IMR-90 (cell line): ENCODE measurements at regions of chr9 and their contacts with region 1.

Region 1: GRCh38 chr9:107340920-107341632 is 58.0 kb downstream of the RAD23B start:
- DNase-seq: peak; percentile 60
- ATAC-seq: peak; percentile 50; the same call in 1 of the 2 replicates
- H3K4me3 ChIP-seq: no peak overlapping the region
- H3K27ac ChIP-seq: no peak overlapping the region
- H3K4me1 ChIP-seq: peaks cover 3% of the 10 kb centered on the region; the same call in 1 of the 2 replicates
- H3K27me3 ChIP-seq: no peaks in the 10 kb centered on the region
- CTCF ChIP-seq: peak; percentile 79
- POLR2A ChIP-seq: no peak
- RAD21 ChIP-seq: peak; percentile 68

Region 2: GRCh38 chr9:107137495-107138202 is 203.4 kb before region 1 on chr9:
- CTCF ChIA-PET with region 1: no interaction called
- POLR2A ChIA-PET with region 1: no interaction called
- dilution Hi-C with region 1: no loop called
- in situ Hi-C with region 1: no loop called
- intact Hi-C with region 1: loop called (anchors 1 kb)
- DNase-seq: peak; percentile 33
- ATAC-seq: peak; percentile 79
- H3K4me3 ChIP-seq: no peak overlapping the region
- H3K27ac ChIP-seq: no peak overlapping the region
- H3K4me1 ChIP-seq: no peaks in the 10 kb centered on the region
- H3K27me3 ChIP-seq: peaks cover 25% of the 10 kb centered on the region
- CTCF ChIP-seq: peak; percentile 67
- POLR2A ChIP-seq: no peak
- RAD21 ChIP-seq: peak; percentile 65

Region 3: GRCh38 chr9:107158321-107158720 is 182.8 kb before region 1 on chr9:
- CTCF ChIA-PET with region 1: no interaction called
- POLR2A ChIA-PET with region 1: no interaction called
- dilution Hi-C with region 1: no loop called
- in situ Hi-C with region 1: no loop called
- intact Hi-C with region 1: loop called (anchors 2 kb)
- DNase-seq: peak; percentile 37
- ATAC-seq: peak; percentile 95
- H3K4me3 ChIP-seq: no peak overlapping the region
- H3K27ac ChIP-seq: no peak overlapping the region
- H3K4me1 ChIP-seq: no peaks in the 10 kb centered on the region
- H3K27me3 ChIP-seq: peaks cover 2% of the 10 kb centered on the region
- CTCF ChIP-seq: peak; percentile 38; the same call in 1 of the 2 replicates
- POLR2A ChIP-seq: no peak
- RAD21 ChIP-seq: peak; percentile 25; the same call in 1 of the 2 replicates

Region 4: DNA sequence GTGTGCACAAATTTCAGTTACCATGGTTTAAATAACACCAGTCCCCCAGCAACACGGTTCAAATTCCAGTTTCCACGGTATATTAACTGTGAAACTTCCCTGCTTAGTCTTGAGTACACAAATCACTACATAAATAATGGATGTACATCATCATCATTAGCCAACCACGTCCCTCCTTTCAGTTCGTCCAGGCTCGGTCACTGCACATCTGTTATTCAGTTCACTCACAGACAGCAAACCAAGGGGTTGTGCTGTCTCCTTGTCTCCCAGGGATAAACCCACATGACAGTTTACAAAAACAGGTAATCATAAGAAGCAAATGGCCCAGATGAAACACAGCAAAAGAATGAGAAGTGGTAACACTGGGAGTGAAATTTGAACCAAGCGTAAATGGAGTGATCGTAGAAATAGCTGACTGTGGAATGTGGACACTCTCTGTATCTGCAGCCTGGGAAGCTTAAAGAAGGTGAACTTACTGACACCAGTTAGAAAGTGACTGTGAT is 119.0 kb before region 1 on chr9:
- CTCF ChIA-PET with region 1: no interaction called
- POLR2A ChIA-PET with region 1: no interaction called
- dilution Hi-C with region 1: no loop called
- in situ Hi-C with region 1: no loop called
- intact Hi-C with region 1: loop called (anchors 5 kb)
- DNase-seq: peak; percentile 79
- ATAC-seq: peak; percentile 94
- H3K4me3 ChIP-seq: peak overlapping the region; percentile 64
- H3K27ac ChIP-seq: peak overlapping the region; percentile 14; the same call in 1 of the 2 replicates
- H3K4me1 ChIP-seq: peaks cover 4% of the 10 kb centered on the region; the same call in 1 of the 2 replicates
- H3K27me3 ChIP-seq: no peaks in the 10 kb centered on the region
- CTCF ChIP-seq: no peak
- POLR2A ChIP-seq: peak; percentile 32; the same call in 1 of the 2 replicates
- RAD21 ChIP-seq: no peak

Region 5: DNA sequence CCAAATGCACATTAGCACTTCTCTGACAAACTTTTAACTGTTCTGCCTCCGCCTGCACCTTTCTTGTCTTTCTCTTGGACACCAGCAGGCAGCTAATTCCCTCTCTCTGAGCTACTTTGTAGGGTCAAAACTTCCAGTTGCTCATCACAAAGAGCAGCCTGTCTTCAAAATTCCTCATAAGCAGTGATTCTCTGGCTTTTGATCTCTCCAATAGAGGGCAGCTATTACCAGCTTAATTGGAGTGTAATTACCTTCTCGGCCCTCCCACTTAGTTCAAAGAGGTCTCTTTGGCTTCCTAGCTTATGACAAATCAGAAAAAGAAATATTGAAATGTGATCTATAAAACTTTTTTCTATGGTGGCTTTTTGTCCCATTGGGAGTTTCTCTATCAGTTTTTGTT is 101.6 kb before region 1 on chr9:
- CTCF ChIA-PET with region 1: interaction called, 20 read pairs
- POLR2A ChIA-PET with region 1: no interaction called
- dilution Hi-C with region 1: no loop called
- in situ Hi-C with region 1: no loop called
- intact Hi-C with region 1: no loop called
- DNase-seq: peak; percentile 48
- ATAC-seq: peak; percentile 48
- H3K4me3 ChIP-seq: no peak overlapping the region
- H3K27ac ChIP-seq: no peak overlapping the region
- H3K4me1 ChIP-seq: peaks cover 6% of the 10 kb centered on the region
- H3K27me3 ChIP-seq: peaks cover 1% of the 10 kb centered on the region; the same call in 1 of the 2 replicates
- CTCF ChIP-seq: peak; percentile 49; the same call in 1 of the 2 replicates
- POLR2A ChIP-seq: no peak
- RAD21 ChIP-seq: peak; percentile 47

Region 6: DNA sequence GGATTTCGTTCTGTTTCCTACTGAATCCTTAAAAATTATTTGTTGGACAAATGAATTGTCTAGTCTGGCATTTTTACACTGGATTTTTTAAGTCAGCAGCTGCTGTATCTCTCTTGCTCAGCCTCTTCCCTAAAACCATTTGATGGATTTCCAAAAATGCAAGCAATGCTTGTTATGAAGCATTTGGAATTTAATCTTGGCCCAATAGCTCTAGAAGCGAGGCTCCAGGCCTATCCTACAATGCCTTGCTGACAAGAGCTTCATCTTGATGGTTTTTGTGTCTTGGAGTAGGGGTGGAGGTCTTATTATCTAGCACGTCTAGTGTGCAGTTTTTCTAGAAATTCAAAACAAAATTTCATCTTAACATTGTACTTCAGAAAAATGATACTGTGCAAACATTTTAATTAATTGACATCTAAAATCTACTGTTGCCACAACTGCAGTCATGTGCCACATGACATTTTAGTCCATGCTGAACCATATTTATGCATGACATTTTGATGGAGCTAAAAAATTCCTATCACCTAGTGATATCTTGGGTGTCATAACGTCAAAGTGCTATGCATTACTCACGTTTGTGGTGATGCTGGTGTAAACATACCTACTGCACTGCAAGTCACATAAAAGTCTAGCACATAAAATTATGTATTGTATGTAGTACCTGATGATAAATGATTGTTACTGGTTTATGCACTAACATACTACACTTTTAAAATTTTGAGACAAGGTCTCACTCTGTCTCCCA is 63.9 kb before region 1 on chr9:
- CTCF ChIA-PET with region 1: no interaction called
- POLR2A ChIA-PET with region 1: no interaction called
- dilution Hi-C with region 1: no loop called
- in situ Hi-C with region 1: no loop called
- intact Hi-C with region 1: no loop called
- DNase-seq: peak; percentile 66
- ATAC-seq: peak; percentile 44
- H3K4me3 ChIP-seq: no peak overlapping the region
- H3K27ac ChIP-seq: peak overlapping the region; percentile 64; the same call in 1 of the 2 replicates
- H3K4me1 ChIP-seq: peaks cover 26% of the 10 kb centered on the region
- H3K27me3 ChIP-seq: no peaks in the 10 kb centered on the region
- CTCF ChIP-seq: no peak
- POLR2A ChIP-seq: no peak
- RAD21 ChIP-seq: no peak